Prostate gland (tissue), 2 donors: ENCODE measurements at regions of chr10 and their contacts with region 1.

Region 1: GRCh38 chr10:74419958-74420375 is 268.9 kb downstream of the ADK start:
- DNase-seq: no peak
- H3K4me3 ChIP-seq: no peak overlapping the region
- H3K27ac ChIP-seq: no peak overlapping the region
- H3K4me1 ChIP-seq: no peaks in the 10 kb centered on the region
- H3K27me3 ChIP-seq: no peaks in the 10 kb centered on the region
- CTCF ChIP-seq: peak in 2 of 4 experiments; percentile 37 to 40
- POLR2A ChIP-seq: no peak

Region 2: GRCh38 chr10:75029857-75030256 is 609.9 kb after region 1 on chr10:
- intact Hi-C with region 1: loop called (anchors 10 kb)
- DNase-seq: no peak
- H3K4me3 ChIP-seq: no peak overlapping the region
- H3K27ac ChIP-seq: no peak overlapping the region
- H3K4me1 ChIP-seq: no peaks in the 10 kb centered on the region
- H3K27me3 ChIP-seq: no peaks in the 10 kb centered on the region
- CTCF ChIP-seq: no peak
- POLR2A ChIP-seq: no peak